Left lung (tissue), 14 donors: ENCODE measurements at regions of chr1 and their contacts with region 1.

Region 1: GRCh38 chr1:207404849-207405525 is 49.1 kb upstream of the CR2 start:
- DNase-seq: peak in 2 of 4 donors; percentile 34 to 46
- ATAC-seq: peak; percentile 97
- H3K4me3 ChIP-seq: no peak overlapping the region
- H3K27ac ChIP-seq: no peak overlapping the region
- H3K4me1 ChIP-seq: peaks cover 0 to 33% of the 10 kb centered on the region in 2 donors
- H3K27me3 ChIP-seq: no peaks in the 10 kb centered on the region
- CTCF ChIP-seq: peak; percentile 71 to 83

Region 2: DNA sequence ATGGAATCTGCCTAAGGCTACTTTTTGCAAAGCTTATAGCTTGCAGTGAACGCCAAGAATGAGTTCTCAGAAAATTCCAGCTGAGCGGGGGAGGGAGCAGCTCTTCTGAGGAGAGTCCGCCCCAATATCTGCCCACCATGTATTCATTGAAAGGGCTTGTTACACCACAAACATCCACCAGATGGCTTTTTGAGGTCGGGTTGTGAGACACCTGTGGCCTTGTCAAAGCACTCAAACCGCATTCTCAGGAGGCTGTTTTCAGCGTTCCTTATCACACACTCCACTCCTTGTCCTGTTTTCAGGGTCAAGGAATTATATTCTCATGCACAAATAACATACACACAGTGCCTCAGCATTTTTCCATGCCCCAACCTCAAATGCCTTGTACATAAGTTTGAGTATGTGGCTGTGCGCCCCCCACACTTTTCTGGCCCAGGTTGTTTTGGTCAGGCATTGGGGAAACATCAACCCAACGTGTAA is 320.2 kb before region 1 on chr1:
- intact Hi-C with region 1: loop called in 1 of 2 experiments (anchors 10 kb)
- DNase-seq: peak in 2 of 4 donors; percentile 50 to 54
- ATAC-seq: peak; percentile 87
- H3K4me3 ChIP-seq: no peak overlapping the region
- H3K27ac ChIP-seq: no peak overlapping the region
- H3K4me1 ChIP-seq: peaks cover 0 to 26% of the 10 kb centered on the region in 2 donors
- H3K27me3 ChIP-seq: no peaks in the 10 kb centered on the region
- CTCF ChIP-seq: peak; percentile 41 to 66